ENCODE measurements at regions of chr10 and their contacts with region 1.

Region 1: DNA sequence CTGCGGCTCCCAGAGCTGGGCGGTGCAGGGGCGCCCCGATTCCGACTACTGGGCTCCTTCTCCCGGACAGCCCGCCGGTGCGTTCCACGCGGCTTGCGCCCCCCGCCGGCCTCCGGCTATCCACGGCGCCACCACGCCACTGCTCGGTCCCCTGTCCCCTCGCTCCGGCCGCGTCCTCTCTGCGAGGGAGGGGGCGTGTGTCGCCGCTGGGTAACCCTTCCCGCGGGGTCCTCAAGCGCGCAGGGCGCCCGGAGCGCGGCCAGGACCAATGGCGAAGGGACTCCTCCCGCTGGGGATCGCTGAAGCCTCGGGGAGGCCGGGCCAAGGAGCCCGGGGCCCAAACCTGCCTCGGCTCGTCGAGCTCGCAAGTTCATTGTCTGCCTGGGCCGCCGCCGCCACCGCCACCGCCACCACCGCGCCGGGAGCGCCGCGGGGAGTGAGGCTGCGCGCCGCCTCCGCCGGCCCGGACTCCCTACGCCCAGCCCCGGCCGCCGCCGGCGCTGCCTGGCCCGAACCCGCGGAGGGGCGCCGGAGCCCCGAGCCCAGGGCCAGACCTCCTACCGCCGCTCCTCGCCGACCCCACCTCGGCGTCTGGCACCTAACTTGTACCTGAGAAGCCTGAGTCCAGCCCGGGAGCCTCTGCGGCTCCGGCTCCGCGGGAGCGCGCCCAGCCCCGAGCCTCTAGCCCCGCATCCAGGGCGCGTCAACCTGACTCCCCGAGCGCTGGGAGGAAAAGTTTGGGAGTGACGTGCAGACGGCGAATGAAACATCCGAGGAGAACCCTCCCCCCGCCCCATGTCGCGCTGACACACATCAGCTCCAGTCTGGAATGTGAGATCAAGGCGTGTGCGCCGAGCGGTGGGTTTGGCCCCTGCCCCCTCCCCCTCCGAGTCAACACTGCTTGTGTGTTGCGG is at the start of gene CHST15:
- DNase-seq: no peak
- H3K4me3 ChIP-seq: peak within 1 kb of the TSS; percentile 35 to 87 (median 62)
- H3K27ac ChIP-seq: peak within 1 kb of the TSS; percentile 82 to 99 (median 95)
- H3K4me1 ChIP-seq: peaks cover 11 to 74% (median 48%) of the 10 kb centered on the region in 6 donors
- H3K27me3 ChIP-seq: peaks cover 0 to 43% (median 4%) of the 10 kb centered on the region in 7 donors
- CTCF ChIP-seq: peak in 5 of 11 experiments; percentile 7 to 29 (median 16)
- POLR2A ChIP-seq: peak in 2 of 3 donors; percentile 34 to 45
- total RNA-seq, gene CHST15: 78.3 to 133 (median 107) TPM

Region 2: DNA sequence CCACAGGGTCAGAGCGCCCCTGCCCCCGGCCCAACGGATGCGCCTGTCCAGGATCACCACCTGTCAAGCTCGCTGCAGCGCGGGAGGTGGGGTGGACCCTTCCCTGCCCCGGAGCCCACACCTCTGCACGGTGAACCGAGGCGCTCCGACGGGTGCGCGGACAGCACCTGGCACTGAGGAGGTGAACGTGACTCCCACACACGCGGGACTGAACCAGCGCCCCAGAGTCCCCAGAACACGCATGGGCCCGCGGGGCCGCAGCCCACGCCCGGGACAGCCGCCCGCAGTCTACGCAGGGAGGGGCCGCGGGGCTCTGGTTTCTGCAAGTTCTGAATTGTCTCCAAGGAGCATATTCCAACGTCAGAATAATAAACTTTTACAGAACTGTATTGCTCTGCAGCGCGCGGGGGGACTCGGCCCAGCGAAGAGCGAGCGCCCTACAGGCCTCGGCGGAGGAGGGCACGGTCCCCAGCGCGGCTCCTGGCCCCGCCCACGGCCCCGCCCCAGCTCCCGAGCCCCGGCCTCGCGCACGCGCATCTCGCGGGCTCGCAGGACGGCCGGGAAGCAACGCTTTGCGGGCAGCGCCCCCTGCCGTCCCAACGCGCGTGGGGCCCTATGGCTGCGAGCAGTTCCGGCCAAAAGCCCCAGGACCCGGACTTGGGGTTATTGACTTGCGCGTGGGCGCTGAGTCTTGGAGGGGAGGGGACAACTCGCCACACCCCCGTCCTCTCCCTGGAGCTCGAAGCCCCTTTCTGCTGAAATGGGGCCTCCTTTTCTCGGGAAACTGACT is 295.9 kb after region 1 on chr10:
- intact Hi-C with region 1: loop called (anchors 5 kb)
- DNase-seq: peak; percentile 99
- H3K4me3 ChIP-seq: peak overlapping the region; percentile 32 to 75 (median 53)
- H3K27ac ChIP-seq: peak overlapping the region in 3 of 8 donors; percentile 41 to 75 (median 58)
- H3K4me1 ChIP-seq: peaks cover 0 to 16% (median 13%) of the 10 kb centered on the region in 6 donors
- H3K27me3 ChIP-seq: peaks cover 0 to 9% (median 0%) of the 10 kb centered on the region in 7 donors
- CTCF ChIP-seq: peak; percentile 88 to 99 (median 98)
- POLR2A ChIP-seq: no peak